ENCODE measurements at regions of chr11 and their contacts with region 1.

Region 1: DNA sequence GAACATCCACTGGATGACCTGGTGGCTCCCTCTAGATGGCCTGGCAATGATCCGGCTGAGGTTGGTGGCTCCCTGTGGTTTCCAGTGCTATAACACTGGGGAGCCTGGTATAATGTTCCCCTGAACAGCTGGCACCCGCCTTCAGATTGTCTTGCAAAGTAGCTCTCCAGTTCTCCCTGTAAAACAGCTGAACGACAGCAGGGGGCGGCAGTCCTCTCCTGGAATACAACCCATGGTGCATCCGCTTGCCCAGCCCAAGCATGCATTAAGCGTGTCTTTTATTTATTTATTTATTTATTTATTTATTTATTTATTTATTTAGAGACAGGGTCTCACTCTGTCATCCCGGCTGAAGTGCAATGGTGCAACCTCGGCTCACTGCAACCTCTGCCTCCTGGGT is 258.9 kb downstream of the BUD13 start:
- DNase-seq: no peak
- H3K4me3 Mint-ChIP-seq: no peak overlapping the region
- H3K27ac Mint-ChIP-seq: no peak overlapping the region
- H3K4me1 Mint-ChIP-seq: no peaks in the 10 kb centered on the region
- H3K27me3 Mint-ChIP-seq: peaks cover under 1% of the 10 kb centered on the region

Region 2: DNA sequence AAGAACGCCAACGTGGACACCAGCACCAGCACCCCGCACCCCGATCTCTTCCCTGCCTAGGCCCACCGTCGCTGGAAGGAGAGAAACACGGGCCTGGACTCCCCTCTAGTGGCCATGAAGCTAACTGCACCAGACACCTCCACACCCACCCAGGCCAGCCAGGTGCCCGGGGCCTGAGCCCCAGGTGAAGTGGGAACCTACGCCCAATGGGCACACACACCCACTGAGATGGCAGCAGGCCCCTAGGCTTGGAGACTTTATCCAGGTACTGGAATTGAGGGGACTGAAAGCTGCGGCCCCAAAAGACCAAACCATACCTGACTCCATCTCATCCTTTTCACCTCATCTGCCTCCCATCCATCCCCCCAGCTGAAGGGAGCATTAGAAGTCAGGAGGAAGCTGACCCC is 177.9 kb after region 1 on chr11:
- intact Hi-C with region 1: loop called (anchors 10 kb)
- DNase-seq: peak; percentile 33
- H3K4me3 Mint-ChIP-seq: no peak overlapping the region
- H3K27ac Mint-ChIP-seq: no peak overlapping the region
- H3K4me1 Mint-ChIP-seq: no peaks in the 10 kb centered on the region
- H3K27me3 Mint-ChIP-seq: no peaks in the 10 kb centered on the region